Mammary epithelial cell (primary cell): ENCODE measurements at regions of chr10 and their contacts with region 1.

Region 1: GRCh38 chr10:110502851-110503301 is 5.2 kb downstream of the DUSP5 start:
- DNase-seq: peak; percentile 55
- H3K4me3 ChIP-seq: no peak overlapping the region
- H3K27ac ChIP-seq: peak overlapping the region; percentile 53
- H3K4me1 ChIP-seq: peaks cover 45% of the 10 kb centered on the region
- H3K27me3 ChIP-seq: no peaks in the 10 kb centered on the region
- CTCF ChIP-seq: no peak

Region 2: DNA sequence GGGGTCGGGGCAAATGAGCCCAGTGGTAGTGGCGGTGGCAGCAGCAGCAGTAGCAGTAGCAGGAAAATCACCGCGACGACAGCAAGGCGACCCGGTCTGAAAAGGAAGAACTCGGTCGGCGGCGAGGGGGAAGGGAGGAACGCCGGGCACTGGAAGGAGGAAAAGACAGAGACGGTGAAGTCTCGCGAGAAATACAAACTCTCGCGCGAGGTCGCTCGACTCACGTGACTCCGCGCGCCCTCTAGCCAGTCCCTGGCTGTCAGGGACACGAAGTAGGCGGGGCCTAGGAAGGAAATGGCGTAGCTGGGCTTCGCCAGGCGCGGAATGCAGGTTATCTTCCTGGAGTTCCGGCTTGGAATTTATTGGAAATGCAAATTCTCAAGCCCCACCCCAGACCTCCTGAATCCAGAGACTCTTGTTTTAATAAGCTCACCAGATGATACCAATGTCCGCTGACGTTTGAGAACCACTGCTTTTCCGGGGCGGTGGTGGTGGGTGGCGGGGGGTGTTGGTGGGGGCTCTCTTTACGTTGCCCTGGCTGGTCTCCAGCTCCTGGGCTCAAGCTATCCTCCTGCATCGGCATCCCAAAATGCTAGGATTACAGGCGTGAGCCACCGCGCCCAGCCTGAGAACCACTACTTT is 198.0 kb before region 1 on chr10 and contains the start of gene SMNDC1:
- CTCF ChIA-PET with region 1: interaction called, 15 read pairs
- dilution Hi-C with region 1: no loop called
- in situ Hi-C with region 1: no loop called
- intact Hi-C with region 1: no loop called
- DNase-seq: peak; percentile 96
- H3K4me3 ChIP-seq: peak within 1 kb of the TSS; percentile 69 to 97 (median 95)
- H3K27ac ChIP-seq: peak within 1 kb of the TSS; percentile 86
- H3K4me1 ChIP-seq: peaks cover 19% of the 10 kb centered on the region
- H3K27me3 ChIP-seq: no peaks in the 10 kb centered on the region
- CTCF ChIP-seq: no peak
- total RNA-seq, gene SMNDC1: 6.5 to 42.8 TPM